ENCODE measurements at regions of chr1 and their contacts with region 1.

Region 1: DNA sequence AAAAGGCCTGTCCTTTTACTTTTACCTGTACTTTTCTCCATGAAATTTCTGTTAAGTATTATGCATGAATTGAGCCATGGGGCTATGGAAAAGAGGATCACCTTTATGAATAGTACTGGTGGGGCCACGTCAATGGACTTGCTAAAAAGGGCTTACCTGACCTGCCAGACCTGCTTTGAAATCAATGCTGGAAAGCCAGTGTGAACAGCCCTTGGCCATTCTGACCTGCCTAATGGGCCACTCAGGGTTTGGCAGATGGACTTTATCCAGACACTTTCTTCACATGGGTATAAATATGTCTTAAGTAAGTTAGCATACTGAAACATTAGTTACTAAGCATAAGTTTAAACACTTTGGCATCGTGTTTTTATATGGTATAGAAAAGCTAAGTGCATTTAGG is 8.3 kb upstream of the GUK1 start:
- DNase-seq: no peak
- H3K4me3 ChIP-seq: no peak overlapping the region
- H3K4me3 Mint-ChIP-seq: no peak overlapping the region
- H3K27ac ChIP-seq: no peak overlapping the region
- H3K27ac Mint-ChIP-seq: no peak overlapping the region
- H3K4me1 ChIP-seq: peaks cover 5% of the 10 kb centered on the region
- H3K4me1 Mint-ChIP-seq: peaks cover 2 to 5% (median 4%) of the 10 kb centered on the region in 4 donors
- H3K27me3 ChIP-seq: no peaks in the 10 kb centered on the region
- H3K27me3 Mint-ChIP-seq: peaks cover 8 to 14% of the 10 kb centered on the region in 2 donors

Region 2: GRCh38 chr1:227999056-227999930 is 132.5 kb before region 1 on chr1:
- CTCF ChIA-PET with region 1: interaction called, 9 read pairs
- POLR2A ChIA-PET with region 1: no interaction called
- intact Hi-C with region 1: loop called (anchors 1 kb)
- DNase-seq: peak; percentile 61 to 73 (median 66)
- H3K4me3 ChIP-seq: no peak overlapping the region
- H3K4me3 Mint-ChIP-seq: no peak overlapping the region
- H3K27ac ChIP-seq: no peak overlapping the region
- H3K27ac Mint-ChIP-seq: no peak overlapping the region
- H3K4me1 ChIP-seq: no peaks in the 10 kb centered on the region
- H3K4me1 Mint-ChIP-seq: peaks cover 0 to 3% (median 0%) of the 10 kb centered on the region in 4 donors
- H3K27me3 ChIP-seq: peaks cover 8% of the 10 kb centered on the region
- H3K27me3 Mint-ChIP-seq: peaks cover 16 to 26% of the 10 kb centered on the region in 2 donors

Region 3: DNA sequence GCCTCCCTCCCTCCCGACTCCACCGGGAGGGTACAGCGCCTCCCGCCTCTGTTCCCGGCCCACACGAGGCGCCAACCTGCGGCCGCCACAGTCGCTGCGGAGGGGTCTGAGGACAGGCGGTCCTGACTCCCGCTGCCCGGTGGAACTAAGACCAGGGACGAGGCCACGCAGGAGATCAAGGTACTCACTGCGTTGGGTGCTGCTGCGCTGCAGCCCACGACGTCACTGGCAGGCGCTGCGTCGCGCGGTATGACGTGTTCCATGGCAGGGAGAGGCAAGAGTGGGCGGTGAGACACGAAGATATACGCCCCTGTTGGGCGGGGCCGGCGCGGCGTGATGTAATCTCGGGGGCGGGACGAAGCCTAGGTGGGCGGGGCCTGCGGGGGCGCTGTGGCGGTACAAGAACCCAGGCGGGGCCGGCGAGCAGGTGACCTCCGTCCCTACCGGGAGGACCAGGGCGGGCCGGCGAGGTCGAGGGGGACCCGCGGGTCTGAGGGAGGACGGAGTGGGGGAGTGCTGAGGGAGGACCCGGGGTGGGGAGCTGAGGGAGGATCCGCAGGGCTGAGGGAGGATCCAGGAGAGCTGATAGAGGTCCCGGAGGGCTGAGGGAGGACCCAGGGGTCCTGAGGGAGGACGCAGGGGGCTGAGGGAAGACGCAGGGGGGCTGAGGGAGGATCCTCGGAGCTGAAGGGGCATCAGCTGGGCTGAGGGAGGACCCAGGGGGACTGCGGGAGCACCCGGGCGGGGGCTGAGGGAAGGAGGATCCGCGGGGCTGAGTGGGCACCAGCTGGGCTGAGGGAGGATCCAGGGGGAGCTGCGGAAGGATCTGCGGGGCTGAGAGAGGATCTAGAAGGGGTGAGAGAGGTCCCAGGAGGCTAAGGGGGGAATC is 22.4 kb before region 1 on chr1 and contains the start of gene MRPL55:
- CTCF ChIA-PET with region 1: interaction called, 14 read pairs
- POLR2A ChIA-PET with region 1: interaction called, 3 read pairs
- intact Hi-C with region 1: no loop called
- DNase-seq: peak; percentile 97 to 99 (median 98)
- H3K4me3 ChIP-seq: peak within 1 kb of the TSS; percentile 68 to 76
- H3K4me3 Mint-ChIP-seq: peak within 1 kb of the TSS; percentile 89 to 98 (median 94)
- H3K27ac ChIP-seq: peak within 1 kb of the TSS; percentile 92
- H3K27ac Mint-ChIP-seq: peak within 1 kb of the TSS; percentile 92 to 98 (median 95)
- H3K4me1 ChIP-seq: peaks cover 21% of the 10 kb centered on the region
- H3K4me1 Mint-ChIP-seq: peaks cover 9 to 45% (median 26%) of the 10 kb centered on the region in 4 donors
- H3K27me3 ChIP-seq: no peaks in the 10 kb centered on the region
- H3K27me3 Mint-ChIP-seq: no peaks in the 10 kb centered on the region
- total RNA-seq, gene MRPL55: 57.8 to 64.5 TPM

Region 4: DNA sequence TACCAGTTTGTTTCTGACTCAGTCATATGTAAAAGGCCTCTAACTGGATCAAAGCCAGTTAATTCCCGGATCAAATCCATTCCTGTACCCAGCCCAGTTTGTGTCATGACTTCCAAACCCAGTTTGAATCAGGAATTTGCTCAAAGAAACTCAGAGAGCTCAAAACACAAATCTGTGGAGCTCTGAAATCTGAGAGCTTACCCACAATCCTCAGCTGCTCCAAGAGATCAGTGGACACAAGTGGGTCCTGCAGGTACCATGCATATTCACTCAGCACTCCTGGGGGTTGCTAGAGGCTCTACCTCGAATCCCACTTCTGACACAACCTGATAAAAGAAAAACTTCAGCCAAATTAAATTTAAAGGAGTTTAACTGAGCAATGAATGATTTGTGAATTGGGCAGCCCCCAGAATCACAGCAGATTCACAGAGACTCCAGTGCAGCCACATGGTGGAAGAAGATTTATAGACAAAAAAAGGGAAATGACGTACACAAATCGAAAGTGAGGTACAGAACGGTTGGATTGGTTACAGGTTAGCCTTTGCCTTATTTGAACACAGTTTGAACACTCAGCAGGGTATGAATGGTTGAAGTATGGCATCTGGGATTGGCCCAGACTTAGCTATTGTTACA is 10.8 kb before region 1 on chr1:
- CTCF ChIA-PET with region 1: interaction called, 14 read pairs
- POLR2A ChIA-PET with region 1: no interaction called
- intact Hi-C with region 1: no loop called
- DNase-seq: no peak
- H3K4me3 ChIP-seq: no peak overlapping the region
- H3K4me3 Mint-ChIP-seq: no peak overlapping the region
- H3K27ac ChIP-seq: no peak overlapping the region
- H3K27ac Mint-ChIP-seq: peak overlapping the region in 3 of 7 donors; percentile 10 to 85 (median 37)
- H3K4me1 ChIP-seq: no peaks in the 10 kb centered on the region
- H3K4me1 Mint-ChIP-seq: peaks cover 0 to 4% (median 2%) of the 10 kb centered on the region in 4 donors
- H3K27me3 ChIP-seq: no peaks in the 10 kb centered on the region
- H3K27me3 Mint-ChIP-seq: peaks cover 3 to 13% of the 10 kb centered on the region in 2 donors